Left lung (tissue), 14 donors: ENCODE measurements at regions of chr2 and their contacts with region 1.

Region 1: GRCh38 chr2:63698825-63699548 is 110.2 kb downstream of the MDH1 start:
- DNase-seq: peak in 3 of 4 donors; percentile 12 to 64 (median 35)
- ATAC-seq: peak; percentile 95
- H3K4me3 ChIP-seq: no peak overlapping the region
- H3K27ac ChIP-seq: peak overlapping the region; percentile 30 to 69
- H3K4me1 ChIP-seq: peaks cover 0 to 12% of the 10 kb centered on the region in 2 donors
- H3K27me3 ChIP-seq: no peaks in the 10 kb centered on the region
- CTCF ChIP-seq: peak; percentile 12 to 40

Region 2: GRCh38 chr2:63861220-63861822 is 162.3 kb after region 1 on chr2:
- intact Hi-C with region 1: loop called in 1 of 2 experiments (anchors 5 kb)
- DNase-seq: peak in 2 of 4 donors; percentile 37 to 66
- ATAC-seq: peak; percentile 76
- H3K4me3 ChIP-seq: no peak overlapping the region
- H3K27ac ChIP-seq: peak overlapping the region in 1 of 2 donors; percentile 19
- H3K4me1 ChIP-seq: peaks cover 0 to 46% of the 10 kb centered on the region in 2 donors
- H3K27me3 ChIP-seq: no peaks in the 10 kb centered on the region
- CTCF ChIP-seq: peak in 1 of 2 donors; percentile 37

Region 3: GRCh38 chr2:64203858-64204632 is 505.1 kb after region 1 on chr2:
- intact Hi-C with region 1: no loop called
- DNase-seq: peak; percentile 59 to 86 (median 68)
- ATAC-seq: peak; percentile 51
- H3K4me3 ChIP-seq: peak overlapping the region in 1 of 2 donors; percentile 16
- H3K27ac ChIP-seq: peak overlapping the region; percentile 83 to 90
- H3K4me1 ChIP-seq: peaks cover 26 to 31% of the 10 kb centered on the region in 2 donors
- H3K27me3 ChIP-seq: no peaks in the 10 kb centered on the region
- CTCF ChIP-seq: no peak